ENCODE measurements at regions of chr11 and their contacts with region 1.

Region 1: GRCh38 chr11:44893846-44894617 is 56.7 kb downstream of the TP53I11 start:
- DNase-seq: peak; percentile 59 to 72
- H3K4me3 ChIP-seq: no peak overlapping the region
- H3K4me3 Mint-ChIP-seq: no peak overlapping the region
- H3K27ac Mint-ChIP-seq: no peak overlapping the region
- H3K4me1 ChIP-seq: no peaks in the 10 kb centered on the region
- H3K4me1 Mint-ChIP-seq: no peaks in the 10 kb centered on the region
- H3K27me3 ChIP-seq: no peaks in the 10 kb centered on the region
- H3K27me3 Mint-ChIP-seq: peaks cover 7% of the 10 kb centered on the region
- CTCF ChIP-seq: peak; percentile 87 to 94

Region 2: DNA sequence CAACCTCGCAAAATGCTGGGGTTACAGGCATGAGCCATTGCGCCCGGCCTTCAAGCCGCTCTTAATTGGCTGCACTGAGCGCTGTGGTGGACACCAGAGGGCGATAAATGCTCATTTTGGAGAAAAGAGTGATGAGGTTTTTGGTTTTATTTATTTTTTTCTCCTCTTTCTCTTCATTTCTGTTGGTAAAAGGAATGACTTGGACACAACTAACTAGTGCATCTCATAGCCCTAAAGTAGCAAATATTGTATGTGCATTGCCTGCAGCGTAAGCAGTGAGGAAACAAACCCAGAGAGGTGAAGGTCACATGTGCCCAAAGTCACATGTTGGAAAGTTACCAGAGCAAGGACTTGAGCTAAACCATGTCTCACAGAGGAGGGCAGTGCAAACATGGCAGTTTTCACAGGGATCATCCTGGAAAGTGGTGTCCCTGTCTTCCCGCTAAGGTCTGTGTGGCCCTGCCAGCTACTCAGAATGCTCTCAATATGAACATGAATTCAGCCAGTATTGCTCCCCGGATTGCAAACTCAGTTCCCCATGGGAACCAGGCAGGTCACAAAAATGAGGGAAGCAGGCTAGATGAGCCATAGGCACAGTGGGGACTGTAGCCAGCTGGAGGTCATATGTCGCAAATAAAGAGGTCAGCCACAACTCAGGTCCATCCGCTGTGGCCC is 337.2 kb before region 1 on chr11:
- CTCF ChIA-PET with region 1: no interaction called
- POLR2A ChIA-PET with region 1: no interaction called
- intact Hi-C with region 1: loop called (anchors 10 kb)
- DNase-seq: peak in 1 of 2 experiments; percentile 62
- H3K4me3 ChIP-seq: no peak overlapping the region
- H3K4me3 Mint-ChIP-seq: no peak overlapping the region
- H3K27ac Mint-ChIP-seq: no peak overlapping the region
- H3K4me1 ChIP-seq: no peaks in the 10 kb centered on the region
- H3K4me1 Mint-ChIP-seq: no peaks in the 10 kb centered on the region
- H3K27me3 ChIP-seq: no peaks in the 10 kb centered on the region
- H3K27me3 Mint-ChIP-seq: no peaks in the 10 kb centered on the region
- CTCF ChIP-seq: peak; percentile 53 to 81

Region 3: DNA sequence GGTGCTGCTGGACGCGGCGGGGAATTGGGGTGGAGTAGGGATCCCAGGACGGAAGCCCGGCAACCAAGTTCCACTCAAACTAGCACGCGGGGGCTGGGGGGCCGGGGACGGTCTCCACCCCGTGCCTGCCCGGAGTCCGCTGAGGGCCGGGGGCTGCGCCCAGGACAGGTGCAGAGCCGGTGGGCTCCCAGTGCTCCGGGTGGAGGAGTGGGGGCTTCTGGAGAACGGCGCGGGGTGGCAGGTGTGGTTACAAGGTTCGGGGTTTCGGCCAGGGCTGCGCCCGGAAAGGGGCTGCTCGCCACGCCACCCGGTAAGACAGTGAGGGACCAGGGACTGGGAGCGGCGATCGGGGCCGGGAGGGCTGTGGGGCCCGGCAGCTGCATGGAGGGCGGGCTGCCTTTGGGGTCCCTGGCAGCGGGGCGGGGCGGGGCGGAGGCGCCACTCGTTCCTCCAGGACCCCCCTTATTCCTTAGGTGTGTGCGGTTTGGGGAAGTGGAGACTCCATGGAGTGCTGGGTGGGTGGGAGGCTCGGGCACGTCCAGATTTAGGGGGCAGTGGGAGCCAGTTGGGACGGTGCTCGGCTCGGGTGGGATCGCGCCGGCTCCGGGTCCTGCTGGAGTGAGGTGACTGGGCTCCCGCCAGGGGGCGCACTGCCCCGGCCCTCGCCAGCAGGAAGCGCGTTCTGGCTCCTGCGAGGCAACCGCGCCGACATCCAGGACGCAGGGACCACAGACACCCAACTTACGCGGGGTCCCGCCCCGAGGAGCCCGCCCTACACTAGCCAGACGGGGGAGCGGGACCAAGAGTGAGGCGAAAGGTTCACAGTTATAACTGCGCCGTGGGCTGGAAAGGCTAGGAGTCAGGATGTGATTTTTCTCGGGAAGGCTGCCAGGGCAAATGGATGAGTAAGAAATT is 166.4 kb before region 1 on chr11:
- CTCF ChIA-PET with region 1: interaction called, 5 read pairs
- POLR2A ChIA-PET with region 1: no interaction called
- intact Hi-C with region 1: loop called (anchors 1 kb)
- DNase-seq: peak; percentile 83 to 89
- H3K4me3 ChIP-seq: peak overlapping the region; percentile 72
- H3K4me3 Mint-ChIP-seq: peak overlapping the region; percentile 76
- H3K27ac Mint-ChIP-seq: no peak overlapping the region
- H3K4me1 ChIP-seq: peaks cover 23% of the 10 kb centered on the region
- H3K4me1 Mint-ChIP-seq: peaks cover 8% of the 10 kb centered on the region
- H3K27me3 ChIP-seq: no peaks in the 10 kb centered on the region
- H3K27me3 Mint-ChIP-seq: no peaks in the 10 kb centered on the region
- CTCF ChIP-seq: peak; percentile 94 to 96

Region 4: DNA sequence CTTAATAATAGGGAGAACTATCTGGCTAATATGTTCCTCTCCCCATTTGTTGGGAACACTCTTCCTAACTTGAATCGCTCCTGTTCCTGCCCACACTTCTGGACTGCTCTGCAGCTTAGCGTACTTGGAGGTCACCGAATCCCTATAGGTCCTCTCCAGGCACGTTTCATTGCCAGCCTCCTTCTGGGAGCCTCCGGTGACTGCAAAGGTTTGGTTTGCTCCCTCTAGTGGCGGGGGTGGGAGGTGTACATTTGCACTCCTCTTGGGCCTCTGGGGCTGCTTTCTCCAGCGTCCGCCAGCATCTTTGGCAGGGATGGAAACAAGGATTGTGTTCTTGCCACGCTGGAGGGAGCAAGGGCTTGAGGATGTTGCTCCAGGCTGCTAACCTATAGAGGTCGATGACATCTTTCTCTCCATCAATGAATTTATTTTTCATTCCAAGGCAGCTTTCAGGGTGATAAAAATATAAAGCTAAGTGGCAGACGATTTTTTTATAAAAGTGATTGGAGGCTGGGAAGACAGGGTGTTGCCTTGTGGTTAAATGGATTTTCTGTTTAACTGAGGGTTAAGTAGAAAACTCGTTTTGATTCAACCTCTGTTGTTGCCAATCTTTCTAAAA is 118.6 kb before region 1 on chr11:
- CTCF ChIA-PET with region 1: no interaction called
- POLR2A ChIA-PET with region 1: no interaction called
- intact Hi-C with region 1: loop called (anchors 5 kb)
- DNase-seq: peak; percentile 77 to 82
- H3K4me3 ChIP-seq: no peak overlapping the region
- H3K4me3 Mint-ChIP-seq: no peak overlapping the region
- H3K27ac Mint-ChIP-seq: no peak overlapping the region
- H3K4me1 ChIP-seq: peaks cover 3% of the 10 kb centered on the region; the same call in 1 of the 2 replicates
- H3K4me1 Mint-ChIP-seq: peaks cover 4% of the 10 kb centered on the region
- H3K27me3 ChIP-seq: no peaks in the 10 kb centered on the region; the same call in 1 of the 2 replicates
- H3K27me3 Mint-ChIP-seq: peaks cover 6% of the 10 kb centered on the region
- CTCF ChIP-seq: peak; percentile 85 to 91

Measured in Caco-2 (cell line).